Aorta (tissue), 5 donors: ENCODE measurements at regions of chr12 and their contacts with region 1.

Region 1: GRCh38 chr12:99984271-99985128 is at the start of gene ANKS1B:
- DNase-seq: peak; percentile 75 to 87
- ATAC-seq: peak; percentile 83
- H3K4me3 ChIP-seq: peak within 1 kb of the TSS; percentile 53 to 92
- H3K27ac ChIP-seq: peak within 1 kb of the TSS in 1 of 2 donors; percentile 34
- H3K4me1 ChIP-seq: peaks cover 0 to 5% of the 10 kb centered on the region in 2 donors
- H3K27me3 ChIP-seq: no peaks in the 10 kb centered on the region
- total RNA-seq, gene ANKS1B: 30.0 to 37.0 TPM

Region 2: DNA sequence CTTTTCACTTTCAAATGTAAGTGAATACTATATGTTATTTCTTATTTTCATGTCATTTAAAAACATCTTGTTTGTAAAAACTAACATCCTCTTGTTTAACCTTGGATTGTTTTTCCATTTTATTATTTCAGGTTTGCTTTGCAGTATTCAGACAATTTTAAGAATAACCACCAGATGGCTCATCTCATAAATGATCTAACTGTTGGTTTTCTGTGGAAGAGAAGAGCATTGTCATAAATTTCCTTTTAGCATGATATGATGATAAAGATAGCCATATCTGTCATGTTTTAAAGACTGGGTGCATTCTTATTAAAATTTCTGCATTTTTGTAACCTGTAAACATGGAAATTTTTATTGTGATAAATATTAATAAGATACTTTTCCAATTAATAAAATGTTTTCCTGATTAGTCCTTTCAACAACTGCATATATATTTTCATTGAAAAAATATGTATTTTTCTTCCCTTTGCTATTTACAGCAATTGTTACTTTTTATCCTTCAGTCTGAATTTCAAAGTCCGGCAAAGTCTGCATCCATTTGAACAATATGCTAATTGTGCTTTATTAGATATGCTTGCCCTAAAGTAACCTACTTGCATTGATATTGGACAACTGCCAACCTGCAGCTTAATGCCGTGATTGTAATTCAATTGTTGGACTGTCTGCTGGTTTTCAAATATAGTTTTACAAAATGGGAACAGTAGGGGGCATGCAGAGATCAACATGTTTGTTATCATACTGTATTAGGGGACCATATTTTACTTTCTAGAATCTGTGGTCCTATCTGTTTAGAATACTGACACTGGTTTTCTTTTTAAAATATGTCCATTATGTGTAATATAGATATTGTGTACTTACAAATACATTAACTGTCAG is 173.5 kb before region 1 on chr12:
- intact Hi-C with region 1: loop called in 1 of 2 experiments (anchors 5 kb)
- DNase-seq: no peak
- ATAC-seq: no peak
- H3K4me3 ChIP-seq: no peak overlapping the region
- H3K27ac ChIP-seq: no peak overlapping the region
- H3K4me1 ChIP-seq: no peaks in the 10 kb centered on the region
- H3K27me3 ChIP-seq: no peaks in the 10 kb centered on the region

Region 3: DNA sequence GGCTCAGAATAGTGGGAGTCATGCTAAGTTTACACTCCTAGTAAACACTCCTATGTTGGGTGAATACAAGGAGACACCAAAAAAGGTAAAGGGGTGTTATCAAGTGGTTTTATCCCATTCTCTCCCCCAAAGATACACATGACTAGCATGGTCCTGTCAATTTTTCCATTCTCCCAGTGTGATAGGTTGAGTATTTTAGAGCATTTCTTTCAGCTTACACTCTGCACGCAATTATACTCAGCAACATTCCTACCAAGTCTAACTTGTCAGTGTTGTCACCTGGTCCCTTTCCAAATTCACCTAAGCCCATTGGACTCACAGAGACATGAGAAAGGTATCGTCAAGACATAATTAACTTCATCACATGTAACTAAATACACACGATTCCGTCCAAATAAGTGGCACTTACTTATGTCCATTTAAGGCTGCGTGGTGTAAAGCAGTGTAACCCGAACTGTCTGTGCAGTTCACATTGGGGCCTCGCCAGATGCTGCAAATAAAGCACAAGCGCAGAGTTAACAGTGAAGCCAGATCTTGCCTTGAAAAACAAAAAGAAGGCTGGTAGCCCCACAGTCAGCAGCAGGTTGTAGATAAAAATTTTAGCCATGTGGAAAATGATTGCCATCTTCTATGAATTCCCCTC is 159.5 kb before region 1 on chr12:
- intact Hi-C with region 1: loop called in 1 of 2 experiments (anchors 10 kb)
- DNase-seq: peak in 1 of 2 donors; percentile 27
- ATAC-seq: peak; percentile 63
- H3K4me3 ChIP-seq: peak overlapping the region in 1 of 2 donors; percentile 18
- H3K27ac ChIP-seq: no peak overlapping the region
- H3K4me1 ChIP-seq: no peaks in the 10 kb centered on the region
- H3K27me3 ChIP-seq: no peaks in the 10 kb centered on the region

Region 4: DNA sequence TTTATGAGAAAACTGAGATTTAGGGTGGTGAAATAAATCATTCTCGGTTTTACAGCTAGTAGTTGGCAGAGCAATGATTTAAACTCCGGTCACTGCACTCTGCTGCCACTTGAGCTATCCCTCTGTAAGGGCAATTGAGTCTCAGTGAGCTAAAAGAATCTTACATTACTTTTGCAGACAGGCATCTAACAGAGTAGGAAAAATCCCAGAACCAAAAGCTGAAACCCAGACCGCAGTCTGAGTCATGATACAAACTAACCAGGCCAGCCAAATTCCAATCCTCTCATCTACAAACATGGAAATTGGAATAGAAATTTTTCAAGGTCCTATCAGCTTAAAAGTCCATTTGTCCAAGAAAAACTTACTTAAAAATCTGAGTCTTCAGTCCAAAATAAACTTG is 73.4 kb before region 1 on chr12:
- intact Hi-C with region 1: loop called in 1 of 2 experiments (anchors 5 kb)
- DNase-seq: peak in 1 of 2 donors; percentile 56
- ATAC-seq: peak; percentile 92
- H3K4me3 ChIP-seq: no peak overlapping the region
- H3K27ac ChIP-seq: no peak overlapping the region
- H3K4me1 ChIP-seq: peaks cover 4% of the 10 kb centered on the region in 2 donors
- H3K27me3 ChIP-seq: no peaks in the 10 kb centered on the region

Region 5: DNA sequence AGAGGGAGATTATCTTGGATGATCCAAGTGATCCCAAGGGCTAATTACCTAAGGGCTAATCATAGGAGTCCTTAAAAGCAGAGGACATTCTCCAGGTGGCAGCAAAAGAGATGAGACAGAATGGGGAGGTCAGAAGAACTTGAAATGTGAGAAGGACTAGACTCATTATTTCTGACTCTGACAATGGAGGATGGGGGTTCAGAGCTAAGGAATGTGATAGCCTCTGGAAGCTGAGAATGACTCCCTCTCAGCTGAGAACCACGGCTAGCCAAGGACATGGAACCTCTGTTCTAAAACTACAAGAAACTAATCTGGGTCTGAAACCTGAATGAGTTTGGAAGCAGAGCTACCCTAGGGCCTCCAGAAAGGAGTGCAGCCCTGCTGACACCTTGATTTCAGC is 35.9 kb after region 1 on chr12:
- intact Hi-C with region 1: no loop called
- DNase-seq: no peak
- ATAC-seq: no peak
- H3K4me3 ChIP-seq: no peak overlapping the region
- H3K27ac ChIP-seq: no peak overlapping the region
- H3K4me1 ChIP-seq: no peaks in the 10 kb centered on the region
- H3K27me3 ChIP-seq: no peaks in the 10 kb centered on the region